B cell (primary cell): ENCODE measurements at regions of chr2 and their contacts with region 1.

Region 1: GRCh38 chr2:143140864-143141661 is 11.8 kb downstream of the ARHGAP15 start:
- DNase-seq: peak; percentile 75
- ATAC-seq: peak; percentile 90
- H3K4me3 ChIP-seq: peak overlapping the region in 4 of 5 experiments; percentile 1 to 54 (median 6)
- H3K4me3 Mint-ChIP-seq: peak overlapping the region; percentile 63
- H3K27ac ChIP-seq: peak overlapping the region; percentile 58 to 80
- H3K27ac Mint-ChIP-seq: peak overlapping the region; percentile 88
- H3K4me1 ChIP-seq: peaks cover 59 to 81% of the 10 kb centered on the region in 2 donors
- H3K4me1 Mint-ChIP-seq: peaks cover 88% of the 10 kb centered on the region
- H3K27me3 ChIP-seq: no peaks in the 10 kb centered on the region
- H3K27me3 Mint-ChIP-seq: no peaks in the 10 kb centered on the region
- CTCF ChIP-seq: no peak

Region 2: DNA sequence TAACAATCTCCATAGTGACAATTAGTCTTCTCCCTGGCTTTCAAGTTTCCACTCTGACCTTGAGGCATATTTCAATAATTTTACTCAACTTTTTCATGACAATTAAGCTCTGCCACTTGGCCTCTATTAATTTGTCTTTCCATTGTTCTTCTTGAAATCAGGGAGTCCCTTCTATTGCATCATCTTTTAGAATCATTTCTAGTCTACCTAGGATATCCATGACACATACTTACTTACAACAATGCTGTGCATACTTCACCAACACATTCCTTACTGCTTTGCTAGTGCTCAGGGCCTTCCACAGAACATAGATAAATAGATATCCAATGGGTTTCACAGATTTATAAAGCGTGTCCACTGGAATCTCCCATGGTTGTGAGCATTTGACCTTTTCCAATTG is 678.8 kb before region 1 on chr2:
- CTCF ChIA-PET with region 1: no interaction called
- POLR2A ChIA-PET with region 1: no interaction called
- intact Hi-C with region 1: no loop called
- DNase-seq: no peak
- ATAC-seq: no peak
- H3K4me3 ChIP-seq: no peak overlapping the region
- H3K4me3 Mint-ChIP-seq: no peak overlapping the region
- H3K27ac ChIP-seq: no peak overlapping the region
- H3K27ac Mint-ChIP-seq: no peak overlapping the region
- H3K4me1 ChIP-seq: no peaks in the 10 kb centered on the region
- H3K4me1 Mint-ChIP-seq: no peaks in the 10 kb centered on the region
- H3K27me3 ChIP-seq: no peaks in the 10 kb centered on the region
- H3K27me3 Mint-ChIP-seq: peaks cover 7% of the 10 kb centered on the region
- CTCF ChIP-seq: no peak

Region 3: DNA sequence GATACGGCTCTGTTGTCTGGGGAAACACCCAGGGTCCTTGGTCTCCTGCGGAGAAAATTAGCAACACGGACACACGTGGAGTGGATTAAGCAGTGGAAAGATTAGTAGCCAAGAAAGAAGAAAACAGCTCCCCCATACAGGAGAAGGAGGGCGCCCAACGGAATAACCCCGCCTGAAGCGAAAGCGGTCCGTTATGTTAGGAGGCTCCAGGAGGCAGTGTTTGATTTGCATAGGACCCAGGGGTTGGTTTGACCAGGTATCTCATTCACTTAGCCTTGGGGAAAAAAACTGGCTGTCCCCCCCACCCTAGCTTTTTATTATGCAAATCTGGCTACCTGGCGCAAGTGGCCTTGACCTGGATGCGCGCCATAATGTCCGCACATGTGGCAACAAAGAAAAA is 433.7 kb before region 1 on chr2:
- CTCF ChIA-PET with region 1: no interaction called
- POLR2A ChIA-PET with region 1: no interaction called
- intact Hi-C with region 1: no loop called
- DNase-seq: no peak
- ATAC-seq: no peak
- H3K4me3 ChIP-seq: no peak overlapping the region
- H3K4me3 Mint-ChIP-seq: no peak overlapping the region
- H3K27ac ChIP-seq: no peak overlapping the region
- H3K27ac Mint-ChIP-seq: no peak overlapping the region
- H3K4me1 ChIP-seq: no peaks in the 10 kb centered on the region
- H3K4me1 Mint-ChIP-seq: no peaks in the 10 kb centered on the region
- H3K27me3 ChIP-seq: no peaks in the 10 kb centered on the region
- H3K27me3 Mint-ChIP-seq: peaks cover 6% of the 10 kb centered on the region
- CTCF ChIP-seq: no peak

Region 4: DNA sequence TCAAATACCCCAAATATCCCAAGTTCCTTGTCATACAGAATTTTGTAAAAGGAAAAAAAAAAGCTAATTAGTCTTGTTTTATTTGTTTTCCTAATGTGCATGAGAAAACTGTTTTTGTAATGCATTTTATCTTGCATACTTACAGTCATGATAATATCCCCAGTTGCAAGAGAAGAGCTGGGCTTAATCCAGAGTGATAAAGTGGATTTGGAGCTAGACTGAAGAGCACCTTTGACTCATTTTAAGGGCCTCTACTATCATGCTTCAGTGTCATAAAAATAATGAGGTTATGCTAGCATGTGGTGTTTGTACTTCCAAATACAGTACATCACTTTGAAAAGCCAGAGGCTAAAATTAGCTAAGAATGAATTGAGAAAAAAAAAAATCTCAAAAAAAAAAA is 14.6 kb after region 1 on chr2:
- CTCF ChIA-PET with region 1: interaction called, 18 read pairs
- POLR2A ChIA-PET with region 1: interaction called, 3 read pairs
- intact Hi-C with region 1: loop called (anchors 1 kb)
- DNase-seq: no peak
- ATAC-seq: no peak
- H3K4me3 ChIP-seq: no peak overlapping the region
- H3K4me3 Mint-ChIP-seq: no peak overlapping the region
- H3K27ac ChIP-seq: peak overlapping the region; percentile 30 to 61
- H3K27ac Mint-ChIP-seq: peak overlapping the region; percentile 73
- H3K4me1 ChIP-seq: peaks cover 73 to 87% of the 10 kb centered on the region in 2 donors
- H3K4me1 Mint-ChIP-seq: peaks cover 82% of the 10 kb centered on the region
- H3K27me3 ChIP-seq: no peaks in the 10 kb centered on the region
- H3K27me3 Mint-ChIP-seq: no peaks in the 10 kb centered on the region
- CTCF ChIP-seq: no peak

Region 5: DNA sequence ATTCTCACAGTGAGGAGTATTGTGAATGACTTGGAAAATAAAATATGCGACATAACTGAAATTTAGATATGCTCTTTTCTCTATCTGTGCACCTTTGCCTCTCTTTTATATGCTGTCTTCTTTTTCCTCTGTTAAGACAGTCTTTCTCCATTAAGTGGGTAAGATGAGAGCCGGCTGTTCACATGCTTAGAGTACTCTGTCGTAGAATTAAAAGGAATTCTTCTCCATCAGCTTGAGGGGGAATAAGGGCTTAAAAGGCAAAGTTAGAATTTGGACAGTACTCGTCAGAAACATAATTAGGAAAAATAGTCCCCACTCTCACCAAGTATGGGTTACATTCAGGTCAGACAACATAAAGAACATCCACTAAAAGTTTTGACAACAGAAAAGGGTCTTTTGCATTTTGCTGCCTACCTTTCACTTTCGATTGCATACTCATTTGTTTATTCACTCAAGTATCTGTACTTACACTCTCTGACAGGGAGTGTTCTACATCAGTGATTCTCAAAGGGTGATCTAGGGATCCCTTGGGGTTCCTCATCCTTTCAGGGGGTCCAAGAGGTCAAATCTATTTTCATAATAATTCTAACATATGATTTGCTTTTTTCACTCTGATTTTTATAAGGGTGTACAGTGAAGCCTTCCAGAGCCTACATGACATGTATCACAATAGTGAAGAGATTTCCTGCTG is 36.2 kb after region 1 on chr2:
- CTCF ChIA-PET with region 1: no interaction called
- POLR2A ChIA-PET with region 1: no interaction called
- intact Hi-C with region 1: loop called (anchors 5 kb)
- DNase-seq: peak; percentile 74
- ATAC-seq: peak; percentile 95
- H3K4me3 ChIP-seq: peak overlapping the region in 3 of 5 experiments; percentile 29 to 57 (median 38)
- H3K4me3 Mint-ChIP-seq: peak overlapping the region; percentile 87
- H3K27ac ChIP-seq: peak overlapping the region; percentile 88 to 90
- H3K27ac Mint-ChIP-seq: peak overlapping the region; percentile 96
- H3K4me1 ChIP-seq: peaks cover 34 to 38% of the 10 kb centered on the region in 2 donors
- H3K4me1 Mint-ChIP-seq: peaks cover 61% of the 10 kb centered on the region
- H3K27me3 ChIP-seq: no peaks in the 10 kb centered on the region
- H3K27me3 Mint-ChIP-seq: no peaks in the 10 kb centered on the region
- CTCF ChIP-seq: no peak

Region 6: GRCh38 chr2:143264851-143265250 is 123.8 kb after region 1 on chr2:
- CTCF ChIA-PET with region 1: no interaction called
- POLR2A ChIA-PET with region 1: no interaction called
- intact Hi-C with region 1: no loop called
- DNase-seq: no peak
- ATAC-seq: no peak
- H3K4me3 ChIP-seq: no peak overlapping the region
- H3K4me3 Mint-ChIP-seq: no peak overlapping the region
- H3K27ac ChIP-seq: no peak overlapping the region
- H3K27ac Mint-ChIP-seq: no peak overlapping the region
- H3K4me1 ChIP-seq: peaks cover 19 to 25% of the 10 kb centered on the region in 2 donors
- H3K4me1 Mint-ChIP-seq: peaks cover 28% of the 10 kb centered on the region
- H3K27me3 ChIP-seq: no peaks in the 10 kb centered on the region
- H3K27me3 Mint-ChIP-seq: no peaks in the 10 kb centered on the region
- CTCF ChIP-seq: no peak